GM10248 (cell line): ENCODE measurements at regions of chr4 and their contacts with region 1.

Region 1: GRCh38 chr4:38154681-38155608 is 194.7 kb downstream of the PTTG2 start:
- DNase-seq: no peak
- CTCF ChIP-seq: no peak

Region 2: DNA sequence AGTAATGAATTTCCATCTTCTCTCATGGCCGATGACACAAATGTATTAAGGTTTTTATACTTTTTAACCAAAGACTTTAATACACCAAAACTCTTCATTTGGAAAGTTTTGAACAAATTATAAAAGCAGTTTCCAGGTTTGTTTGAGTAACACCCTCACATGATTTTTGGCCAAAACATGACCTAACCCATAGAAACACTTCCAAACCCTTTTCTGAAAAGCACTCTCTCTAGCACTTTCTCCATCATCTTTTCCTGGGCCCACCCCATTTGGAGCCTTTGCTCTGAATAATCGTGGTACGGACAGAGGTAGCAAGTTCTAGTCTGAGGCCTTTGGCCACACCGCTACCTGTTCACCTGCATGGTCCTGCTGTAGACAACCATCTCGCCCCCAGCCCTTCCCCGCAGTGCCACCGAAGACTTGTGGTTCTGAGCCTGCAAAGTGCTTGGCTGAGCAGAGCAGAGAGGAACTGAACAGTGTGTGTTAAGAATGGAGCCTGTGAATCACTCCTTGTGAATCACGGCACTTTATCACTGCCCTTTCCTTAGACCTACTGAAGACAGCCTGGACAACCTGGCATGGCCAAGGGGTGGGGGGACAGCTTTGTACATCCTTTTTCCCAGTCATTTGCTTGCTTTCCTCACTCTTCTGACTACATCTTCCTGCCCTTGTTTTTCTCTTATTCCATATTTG is 13.0 kb before region 1 on chr4:
- CTCF ChIA-PET with region 1: interaction called, 15 read pairs
- POLR2A ChIA-PET with region 1: interaction called, 3 read pairs
- DNase-seq: no peak
- CTCF ChIP-seq: no peak

Region 3: GRCh38 chr4:38723726-38724474 is 569.0 kb after region 1 on chr4:
- CTCF ChIA-PET with region 1: no interaction called
- POLR2A ChIA-PET with region 1: no interaction called
- DNase-seq: no peak
- CTCF ChIP-seq: no peak